Naive thymus-derived CD8-positive, alpha-beta T cell (primary cell): ENCODE measurements at regions of chr21 and their contacts with region 1.

Region 1: GRCh38 chr21:28832013-28832714 is 160.5 kb downstream of the LTN1 start:
- DNase-seq: peak in 6 of 10 donors; percentile 2 to 60 (median 28)
- ATAC-seq: peak; percentile 93 to 96
- H3K4me3 Mint-ChIP-seq: peak overlapping the region; percentile 22 to 76 (median 64)
- H3K27ac Mint-ChIP-seq: peak overlapping the region in 9 of 10 donors; percentile 24 to 90 (median 57)
- H3K4me1 Mint-ChIP-seq: peaks cover 35 to 73% (median 69%) of the 10 kb centered on the region in 4 donors
- H3K27me3 Mint-ChIP-seq: no peaks in the 10 kb centered on the region

Region 2: DNA sequence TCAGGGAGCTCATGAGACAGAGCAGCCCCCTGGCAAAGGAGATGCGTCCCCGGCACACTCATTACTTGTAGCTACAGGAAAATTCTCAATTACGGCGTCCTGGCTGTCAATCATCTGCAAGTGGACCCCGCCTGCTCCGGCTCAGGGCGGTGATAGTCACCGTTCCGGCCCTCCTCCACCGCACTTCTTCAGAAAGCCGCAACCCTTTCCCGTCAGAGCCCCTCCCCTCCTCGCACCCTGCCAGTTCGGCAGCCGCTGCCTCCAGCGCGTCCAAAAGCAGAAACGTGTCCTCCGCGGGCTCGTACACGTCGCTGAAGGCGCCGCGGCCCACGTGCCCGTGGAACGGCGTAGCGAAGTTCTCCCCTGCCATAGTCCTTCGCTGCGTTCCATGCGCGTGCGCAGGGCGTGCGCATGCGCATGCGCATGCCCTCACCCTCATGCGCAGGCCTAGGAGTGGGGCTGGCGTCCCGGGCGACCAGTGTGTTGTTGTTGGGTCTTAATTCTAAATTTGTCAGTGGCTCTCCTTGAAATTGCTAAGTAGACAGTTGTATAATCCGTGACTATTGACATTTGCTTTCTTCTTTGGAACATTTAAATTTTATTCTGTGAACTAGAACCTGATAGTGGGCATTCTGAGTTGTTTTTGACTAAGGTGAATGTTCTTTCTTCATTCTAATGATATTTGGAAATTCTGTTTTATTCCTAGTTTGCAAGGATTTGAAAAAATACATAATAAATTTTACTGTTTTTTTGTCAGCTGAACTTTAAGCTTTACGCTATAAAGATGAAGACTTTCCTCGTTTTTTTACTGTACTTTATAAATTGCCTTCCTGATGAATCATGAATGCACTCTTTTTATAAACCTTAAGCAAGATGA is 53.0 kb after region 1 on chr21:
- POLR2A ChIA-PET with region 1: interaction called, 17 read pairs
- DNase-seq: peak; percentile 76 to 94 (median 92)
- ATAC-seq: peak; percentile 92 to 93
- H3K4me3 Mint-ChIP-seq: peak overlapping the region; percentile 90 to 98 (median 94)
- H3K27ac Mint-ChIP-seq: peak overlapping the region; percentile 93 to 100 (median 99)
- H3K4me1 Mint-ChIP-seq: peaks cover 15 to 24% (median 20%) of the 10 kb centered on the region in 4 donors
- H3K27me3 Mint-ChIP-seq: peaks cover 0 to 8% (median 0%) of the 10 kb centered on the region in 5 donors

Region 3: GRCh38 chr21:28928578-28929420 is 96.6 kb after region 1 on chr21:
- POLR2A ChIA-PET with region 1: no interaction called
- DNase-seq: no peak
- ATAC-seq: no peak
- H3K4me3 Mint-ChIP-seq: no peak overlapping the region
- H3K27ac Mint-ChIP-seq: peak overlapping the region in 1 of 10 donors; percentile 11
- H3K4me1 Mint-ChIP-seq: peaks cover 0 to 4% (median 0%) of the 10 kb centered on the region in 4 donors
- H3K27me3 Mint-ChIP-seq: no peaks in the 10 kb centered on the region